ENCODE measurements at regions of chr16 and their contacts with region 1.

Region 1: GRCh38 chr16:85554112-85554813 is 58.9 kb upstream of the GSE1 start:
- DNase-seq: peak; percentile 90
- ATAC-seq: peak; percentile 71
- H3K4me3 Mint-ChIP-seq: peak overlapping the region; percentile 81
- H3K27ac Mint-ChIP-seq: peak overlapping the region; percentile 88
- H3K4me1 Mint-ChIP-seq: peaks cover 32% of the 10 kb centered on the region
- H3K27me3 Mint-ChIP-seq: no peaks in the 10 kb centered on the region

Region 2: DNA sequence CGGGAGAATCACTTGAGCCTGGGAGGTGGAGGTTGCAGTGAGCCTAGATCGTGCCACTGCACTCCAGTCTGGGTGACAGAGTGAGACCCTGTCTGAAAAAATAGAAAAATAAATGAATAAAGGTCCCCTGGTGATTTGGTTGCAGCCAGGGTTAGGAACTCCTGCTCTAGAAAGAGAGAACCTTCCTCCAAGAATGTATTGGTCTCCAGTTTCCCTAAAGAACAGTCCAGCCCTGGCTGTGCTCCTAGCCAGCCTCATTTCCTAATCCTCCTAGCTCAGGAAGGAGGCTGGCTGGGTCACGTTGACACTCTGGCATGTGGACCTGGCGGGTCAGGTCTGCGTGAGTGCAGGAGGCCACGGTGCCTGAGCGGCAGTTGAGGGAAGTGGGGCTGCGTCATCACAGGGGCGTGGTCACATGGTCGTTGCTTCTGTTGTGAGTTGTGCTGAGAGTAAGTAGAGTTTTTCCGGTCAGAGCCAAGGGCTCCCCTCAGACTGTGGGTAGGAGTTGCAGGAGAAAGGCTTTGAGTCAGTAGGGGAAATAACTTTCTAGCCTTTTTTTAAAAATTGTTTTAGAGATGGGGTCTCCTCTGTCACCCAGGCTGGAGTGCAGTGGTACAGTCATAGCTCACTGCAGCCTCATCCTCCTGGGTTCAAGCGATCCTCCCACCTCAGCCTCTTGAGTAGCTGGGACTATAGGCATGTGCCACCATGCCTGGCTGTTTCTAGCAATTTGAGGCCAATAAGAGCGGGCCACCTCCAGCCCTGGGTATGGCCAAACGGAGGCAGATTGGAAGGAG is 248.1 kb before region 1 on chr16:
- CTCF ChIA-PET with region 1: interaction called, 3 read pairs
- POLR2A ChIA-PET with region 1: no interaction called
- intact Hi-C with region 1: loop called in 1 of 2 experiments (anchors 1 kb)
- DNase-seq: peak; percentile 95
- ATAC-seq: peak; percentile 94
- H3K4me3 Mint-ChIP-seq: no peak overlapping the region
- H3K27ac Mint-ChIP-seq: peak overlapping the region; percentile 89
- H3K4me1 Mint-ChIP-seq: peaks cover 55% of the 10 kb centered on the region
- H3K27me3 Mint-ChIP-seq: no peaks in the 10 kb centered on the region

Region 3: GRCh38 chr16:85569615-85570212 is 15.5 kb after region 1 on chr16:
- CTCF ChIA-PET with region 1: interaction called, 6 read pairs
- POLR2A ChIA-PET with region 1: interaction called, 3 read pairs
- intact Hi-C with region 1: loop called in 1 of 2 experiments (anchors 1 kb)
- DNase-seq: peak; percentile 50
- ATAC-seq: peak; percentile 42
- H3K4me3 Mint-ChIP-seq: peak overlapping the region; percentile 46
- H3K27ac Mint-ChIP-seq: peak overlapping the region; percentile 76
- H3K4me1 Mint-ChIP-seq: peaks cover 46% of the 10 kb centered on the region
- H3K27me3 Mint-ChIP-seq: no peaks in the 10 kb centered on the region

Region 4: GRCh38 chr16:85688586-85689284 is 134.5 kb after region 1 on chr16 and contains the start of gene GINS2:
- CTCF ChIA-PET with region 1: no interaction called
- POLR2A ChIA-PET with region 1: no interaction called
- intact Hi-C with region 1: loop called in 1 of 2 experiments (anchors 1 kb)
- DNase-seq: peak; percentile 96
- ATAC-seq: peak; percentile 100
- H3K4me3 Mint-ChIP-seq: peak within 1 kb of the TSS; percentile 88
- H3K27ac Mint-ChIP-seq: peak within 1 kb of the TSS; percentile 93
- H3K4me1 Mint-ChIP-seq: peaks cover 18% of the 10 kb centered on the region
- H3K27me3 Mint-ChIP-seq: peaks cover 4% of the 10 kb centered on the region
- total RNA-seq, gene GINS2: 86.4 to 87.5 TPM

Region 5: GRCh38 chr16:85995541-85996423 is 441.5 kb after region 1 on chr16:
- CTCF ChIA-PET with region 1: no interaction called
- POLR2A ChIA-PET with region 1: no interaction called
- intact Hi-C with region 1: loop called in 1 of 2 experiments (anchors 10 kb)
- DNase-seq: peak; percentile 68
- ATAC-seq: peak; percentile 33
- H3K4me3 Mint-ChIP-seq: no peak overlapping the region
- H3K27ac Mint-ChIP-seq: peak overlapping the region; percentile 82
- H3K4me1 Mint-ChIP-seq: peaks cover 62% of the 10 kb centered on the region
- H3K27me3 Mint-ChIP-seq: peaks cover 2% of the 10 kb centered on the region